A549 (cell line): ENCODE measurements at regions of chr3 and their contacts with region 1.

Region 1: GRCh38 chr3:49093853-49094767 is at the start of gene QRICH1:
- DNase-seq: peak; percentile 82 to 97
- ATAC-seq: peak; percentile 91 to 92
- H3K4me3 ChIP-seq: peak within 1 kb of the TSS; percentile 98
- H3K27ac ChIP-seq: peak within 1 kb of the TSS; percentile 93 to 94
- H3K4me1 ChIP-seq: peaks cover 19% of the 10 kb centered on the region; the same call in 1 of the 3 replicates
- CTCF ChIP-seq: peak; percentile 37
- EP300 ChIP-seq: no peak
- POLR2A ChIP-seq: peak; percentile 40
- RAD21 ChIP-seq: peak; percentile 29 to 35; a peak in 2 of 5 replicates
- polyA plus RNA-seq, gene QRICH1: 53.8 and 76.2 TPM in 2 replicates

Region 2: DNA sequence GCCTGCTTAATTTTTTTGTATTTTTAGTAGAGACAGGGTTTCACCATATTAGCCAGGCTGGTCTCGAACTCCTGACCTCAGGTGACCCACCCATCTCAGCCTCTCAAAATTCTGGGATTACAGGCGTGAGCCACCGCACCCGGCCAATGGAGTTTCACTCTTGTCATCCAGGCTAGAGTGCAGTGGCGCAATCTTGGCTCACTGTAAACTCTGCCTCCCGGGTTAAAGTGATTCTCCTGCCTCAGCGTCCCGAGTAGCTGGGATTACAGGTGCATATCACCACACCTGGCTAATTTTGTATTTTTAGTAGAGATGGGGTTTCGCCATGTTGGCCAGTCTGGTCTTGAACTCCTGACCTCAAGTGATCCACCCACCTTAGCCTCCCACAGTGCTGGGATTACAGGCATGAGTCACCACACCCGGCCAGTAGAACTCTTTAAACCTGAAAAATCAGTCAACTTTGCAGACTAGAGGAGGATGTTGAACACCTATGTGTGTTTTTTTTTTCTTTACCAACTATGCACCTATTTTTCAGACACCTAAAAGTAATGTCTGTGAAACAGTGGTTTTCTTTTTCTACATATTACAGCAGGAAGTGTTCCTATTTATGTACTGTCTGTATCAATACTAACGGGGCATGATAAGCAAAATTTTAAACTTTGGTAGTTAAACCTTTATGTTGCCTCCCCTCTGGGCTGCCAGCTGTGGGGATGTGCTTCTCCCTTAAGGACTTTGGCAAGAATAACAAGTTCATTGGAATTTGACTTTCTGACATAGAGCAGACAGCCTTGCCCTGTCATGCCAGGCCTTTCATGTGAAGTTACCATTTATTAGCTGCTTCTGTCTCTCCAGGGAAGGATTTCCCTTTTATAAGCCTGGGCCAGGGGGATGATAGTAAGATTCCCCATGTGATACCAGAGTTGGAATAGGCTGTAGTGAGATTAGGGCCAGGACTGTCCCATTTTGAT is 167.4 kb before region 1 on chr3:
- CTCF ChIA-PET with region 1: no interaction called
- POLR2A ChIA-PET with region 1: no interaction called
- DNase-seq: no peak
- ATAC-seq: no peak; a peak in 1 of 6 replicates
- H3K4me3 ChIP-seq: no peak overlapping the region
- H3K27ac ChIP-seq: no peak overlapping the region
- H3K4me1 ChIP-seq: peaks cover 30% of the 10 kb centered on the region
- CTCF ChIP-seq: no peak
- EP300 ChIP-seq: no peak
- POLR2A ChIP-seq: no peak
- RAD21 ChIP-seq: no peak

Region 3: GRCh38 chr3:49021813-49022687 is 72.1 kb before region 1 on chr3 and contains the start of gene NDUFAF3:
- CTCF ChIA-PET with region 1: interaction called, 5 read pairs
- POLR2A ChIA-PET with region 1: interaction called, 32 read pairs
- DNase-seq: peak; percentile 63 to 96
- ATAC-seq: peak; percentile 69 to 83
- H3K4me3 ChIP-seq: peak within 1 kb of the TSS; percentile 76
- H3K27ac ChIP-seq: peak within 1 kb of the TSS; percentile 98 to 100
- H3K4me1 ChIP-seq: peaks cover 26% of the 10 kb centered on the region
- CTCF ChIP-seq: peak; percentile 71
- EP300 ChIP-seq: no peak
- POLR2A ChIP-seq: peak; percentile 93
- RAD21 ChIP-seq: no peak
- polyA plus RNA-seq, gene NDUFAF3: 44.3 and 46.5 TPM in 2 replicates

Region 4: GRCh38 chr3:49028673-49029562 is 65.2 kb before region 1 on chr3 and contains the start of gene IMPDH2:
- CTCF ChIA-PET with region 1: interaction called, 5 read pairs
- POLR2A ChIA-PET with region 1: interaction called, 28 read pairs
- DNase-seq: peak; percentile 47 to 91
- ATAC-seq: peak; percentile 83 to 88
- H3K4me3 ChIP-seq: peak within 1 kb of the TSS; percentile 81
- H3K27ac ChIP-seq: peak within 1 kb of the TSS; percentile 90 to 91
- H3K4me1 ChIP-seq: peaks cover 14% of the 10 kb centered on the region
- CTCF ChIP-seq: no peak
- EP300 ChIP-seq: no peak
- POLR2A ChIP-seq: peak; percentile 100
- RAD21 ChIP-seq: no peak
- polyA plus RNA-seq, gene IMPDH2: 212 and 222 TPM in 2 replicates

Region 5: DNA sequence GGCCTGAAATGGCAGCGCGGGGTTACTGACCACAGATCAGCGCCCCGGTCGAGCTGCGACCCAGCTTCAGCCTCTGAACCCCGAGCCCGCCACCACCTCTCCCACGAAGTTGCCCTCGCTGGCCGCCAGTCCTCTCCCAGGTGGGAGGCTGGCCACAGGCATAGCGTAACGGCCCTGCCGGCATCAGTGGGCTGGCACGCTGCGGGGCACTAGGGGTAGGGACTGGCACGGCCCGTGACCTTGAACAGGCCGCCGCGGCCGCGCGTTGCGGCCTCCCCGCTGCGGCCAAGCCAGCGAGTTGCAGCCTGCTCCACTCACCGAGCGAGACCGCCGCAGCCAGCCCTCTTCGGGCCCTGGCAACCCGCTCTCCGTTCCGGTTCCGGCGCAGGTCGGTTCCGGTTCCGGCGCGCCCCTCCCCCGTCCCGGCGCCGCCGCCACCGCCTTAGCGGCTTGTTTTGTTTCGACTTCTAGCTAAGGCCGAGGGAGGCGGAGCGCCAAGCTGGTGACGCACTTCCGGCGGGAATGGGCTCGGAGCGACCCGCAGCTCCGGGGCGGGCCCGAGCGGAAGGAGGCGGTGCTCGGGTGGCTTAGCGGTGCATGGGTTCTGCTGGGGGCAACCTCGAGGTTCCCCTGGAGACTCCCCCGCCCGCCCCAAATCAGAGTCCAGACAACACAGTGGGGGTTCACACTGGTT is 26.5 kb after region 1 on chr3 and contains the start of gene USP19:
- CTCF ChIA-PET with region 1: interaction called, 7 read pairs
- POLR2A ChIA-PET with region 1: interaction called, 12 read pairs
- DNase-seq: peak; percentile 88 to 91
- ATAC-seq: peak; percentile 95 to 97
- H3K4me3 ChIP-seq: peak within 1 kb of the TSS; percentile 93
- H3K27ac ChIP-seq: peak within 1 kb of the TSS; percentile 93 to 99
- H3K4me1 ChIP-seq: peaks cover 14% of the 10 kb centered on the region
- CTCF ChIP-seq: no peak
- EP300 ChIP-seq: no peak
- POLR2A ChIP-seq: peak; percentile 62
- RAD21 ChIP-seq: no peak
- polyA plus RNA-seq, gene USP19: 28.8 and 30.5 TPM in 2 replicates

Region 6: DNA sequence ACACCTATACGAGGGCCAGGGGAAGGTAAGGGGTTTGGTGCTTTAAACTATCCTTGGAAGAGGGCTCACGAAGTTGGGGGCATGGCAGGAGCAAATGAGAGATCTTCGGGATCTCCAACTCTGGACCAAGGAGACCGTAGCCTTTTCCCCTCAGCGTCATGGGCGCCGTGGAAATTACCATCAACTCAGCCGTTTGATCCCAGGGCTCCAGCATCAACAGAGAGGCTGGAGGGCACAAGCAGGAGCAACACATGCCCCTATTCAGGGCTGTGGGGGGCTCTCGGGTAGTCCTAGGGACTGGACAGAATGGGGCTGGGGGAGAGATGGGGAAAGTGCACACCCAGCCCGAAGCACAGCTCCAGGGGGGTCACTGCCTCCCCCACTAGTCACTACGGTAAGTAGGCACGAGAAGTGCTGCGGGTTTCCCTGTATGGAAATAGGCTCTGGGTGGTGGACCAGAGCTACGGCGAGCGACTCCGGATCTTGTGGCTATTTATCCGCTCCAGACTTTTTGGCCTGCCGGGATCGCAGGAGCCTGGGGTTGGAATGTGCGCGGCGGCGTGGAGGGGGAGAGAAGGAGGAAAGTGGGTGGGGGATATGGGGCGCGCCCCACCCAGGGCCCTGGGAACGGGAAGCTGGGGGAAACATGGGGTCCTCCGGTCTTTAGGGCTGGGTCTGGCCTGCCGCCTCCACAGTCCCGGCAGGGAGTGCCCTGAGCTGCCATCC is 39.3 kb after region 1 on chr3:
- CTCF ChIA-PET with region 1: interaction called, 5 read pairs
- POLR2A ChIA-PET with region 1: interaction called, 12 read pairs
- DNase-seq: peak; percentile 81 to 91
- ATAC-seq: peak; percentile 81 to 91
- H3K4me3 ChIP-seq: peak overlapping the region; percentile 80
- H3K27ac ChIP-seq: peak overlapping the region; percentile 99 to 100
- H3K4me1 ChIP-seq: peaks cover 18% of the 10 kb centered on the region
- CTCF ChIP-seq: no peak
- EP300 ChIP-seq: no peak
- POLR2A ChIP-seq: peak; percentile 36
- RAD21 ChIP-seq: no peak

Region 7: GRCh38 chr3:49163609-49164008 is 69.5 kb after region 1 on chr3:
- CTCF ChIA-PET with region 1: no interaction called
- POLR2A ChIA-PET with region 1: no interaction called
- DNase-seq: no peak
- ATAC-seq: no peak
- H3K4me3 ChIP-seq: no peak overlapping the region
- H3K27ac ChIP-seq: no peak overlapping the region
- H3K4me1 ChIP-seq: peaks cover 12% of the 10 kb centered on the region; the same call in 2 of the 3 replicates
- CTCF ChIP-seq: no peak
- EP300 ChIP-seq: no peak
- POLR2A ChIP-seq: no peak
- RAD21 ChIP-seq: no peak

Region 8: DNA sequence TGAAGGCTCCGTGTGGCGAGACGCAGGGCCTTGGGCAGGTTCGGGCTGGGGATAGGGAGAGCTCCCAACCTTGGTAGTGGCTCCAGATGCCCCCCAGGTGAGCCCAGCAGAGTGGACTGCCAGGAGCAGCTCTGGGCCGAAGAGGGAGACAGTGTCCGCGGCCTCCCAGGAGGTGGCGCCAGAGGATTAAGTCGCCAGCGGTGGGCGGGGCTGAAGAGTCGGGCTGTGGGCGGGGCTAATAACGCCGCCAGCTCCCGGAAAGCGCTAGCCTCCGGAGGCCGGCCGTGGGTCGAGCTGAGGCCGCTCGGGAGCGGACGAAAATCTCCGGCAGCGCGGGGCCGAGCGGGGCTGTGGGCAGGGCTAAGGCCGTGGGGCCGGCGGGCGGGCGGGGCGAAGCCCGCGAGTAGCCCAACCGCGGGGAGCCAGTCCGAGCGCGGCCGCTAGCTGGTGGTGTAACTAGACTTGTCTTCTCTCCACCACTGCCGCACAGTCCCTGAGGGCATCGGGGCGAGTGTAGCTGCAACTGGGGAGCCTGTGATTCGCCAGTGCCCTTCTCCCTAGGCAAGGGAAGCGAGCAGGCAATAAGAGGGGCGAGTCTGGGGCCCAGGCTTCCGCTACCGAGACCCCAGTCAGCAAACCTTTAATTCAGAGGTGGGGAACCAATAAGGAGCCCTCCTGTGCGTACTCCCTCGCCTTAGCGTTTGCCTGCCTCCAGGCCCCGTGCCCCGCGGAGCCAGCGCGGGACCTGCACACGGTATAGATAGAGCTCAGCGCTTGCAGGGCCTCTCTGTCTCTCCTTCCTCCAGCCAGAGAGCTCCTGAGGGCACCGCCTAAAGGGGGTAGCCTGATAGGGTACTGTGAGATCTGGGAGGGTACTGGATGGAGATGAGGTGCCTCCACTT is 445.8 kb after region 1 on chr3:
- CTCF ChIA-PET with region 1: no interaction called
- POLR2A ChIA-PET with region 1: no interaction called
- DNase-seq: peak; percentile 57 to 90
- ATAC-seq: peak; percentile 94 to 97
- H3K4me3 ChIP-seq: peak overlapping the region; percentile 49
- H3K27ac ChIP-seq: peak overlapping the region; percentile 72 to 86
- H3K4me1 ChIP-seq: peaks cover 5% of the 10 kb centered on the region; the same call in 2 of the 3 replicates
- CTCF ChIP-seq: peak; percentile 68
- EP300 ChIP-seq: no peak
- POLR2A ChIP-seq: peak; percentile 50
- RAD21 ChIP-seq: peak; percentile 87 to 93